ENCODE measurements at regions of chr2 and their contacts with region 1.

Region 1: GRCh38 chr2:234451852-234452625 is 44.8 kb downstream of the ARL4C start:
- DNase-seq: peak; percentile 64
- H3K4me3 ChIP-seq: no peak overlapping the region
- CTCF ChIP-seq: no peak

Region 2: GRCh38 chr2:234308813-234309195 is 143.2 kb before region 1 on chr2:
- in situ Hi-C with region 1: no loop called
- DNase-seq: peak; percentile 43
- H3K4me3 ChIP-seq: no peak overlapping the region
- CTCF ChIP-seq: no peak

Region 3: GRCh38 chr2:234377761-234378391 is 74.2 kb before region 1 on chr2:
- in situ Hi-C with region 1: loop called (anchors 5 kb)
- DNase-seq: peak; percentile 97
- H3K4me3 ChIP-seq: no peak overlapping the region
- CTCF ChIP-seq: no peak

Region 4: GRCh38 chr2:234395891-234396420 is 56.1 kb before region 1 on chr2:
- in situ Hi-C with region 1: no loop called
- DNase-seq: no peak
- H3K4me3 ChIP-seq: no peak overlapping the region
- CTCF ChIP-seq: no peak